Pancreas (tissue), 10 donors: ENCODE measurements at regions of chr1 and their contacts with region 1.

Region 1: DNA sequence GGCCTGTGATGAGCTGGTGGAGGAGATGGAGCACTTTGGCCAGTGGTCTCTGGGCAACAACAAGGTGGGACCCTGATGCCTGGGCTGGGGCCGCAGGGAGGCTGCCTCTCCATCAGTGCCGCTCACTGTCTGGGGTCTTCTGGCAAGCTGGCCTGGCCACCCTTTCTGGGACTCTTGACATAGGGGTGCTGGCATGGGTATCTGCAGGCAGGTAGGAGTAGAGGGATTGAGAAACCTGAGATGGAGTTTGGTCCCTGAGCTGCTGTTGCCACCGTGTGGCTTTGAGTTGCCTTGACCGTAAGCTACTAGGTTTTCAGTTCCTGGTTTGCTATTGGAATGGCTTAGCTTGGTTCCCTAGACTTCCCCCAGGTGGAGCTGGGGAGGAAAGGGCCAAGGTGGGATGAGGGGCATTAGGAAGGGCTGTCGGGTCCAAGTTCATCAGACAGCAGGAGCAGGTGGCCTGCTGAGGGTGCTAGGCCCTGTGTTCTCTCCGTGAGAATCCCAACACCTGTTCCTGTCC is 13.2 kb upstream of the MFN2 start:
- DNase-seq: peak in 4 of 6 donors; percentile 70 to 81 (median 76)
- ATAC-seq: peak; percentile 89 to 97 (median 94)
- H3K4me3 ChIP-seq: no peak overlapping the region
- H3K27ac ChIP-seq: peak overlapping the region in 1 of 4 donors; percentile 27
- H3K4me1 ChIP-seq: peaks cover 0 to 4% (median 0%) of the 10 kb centered on the region in 3 donors
- H3K27me3 ChIP-seq: no peaks in the 10 kb centered on the region
- CTCF ChIP-seq: peak; percentile 17 to 42 (median 33)

Region 2: GRCh38 chr1:11918779-11919519 is 48.1 kb before region 1 on chr1:
- intact Hi-C with region 1: loop called in 1 of 3 experiments (anchors 10 kb)
- DNase-seq: no peak
- ATAC-seq: peak in 3 of 4 donors; percentile 22 to 48 (median 45)
- H3K4me3 ChIP-seq: no peak overlapping the region
- H3K27ac ChIP-seq: no peak overlapping the region
- H3K4me1 ChIP-seq: peaks cover 0 to 3% (median 0%) of the 10 kb centered on the region in 3 donors
- H3K27me3 ChIP-seq: no peaks in the 10 kb centered on the region
- CTCF ChIP-seq: no peak

Region 3: GRCh38 chr1:12143631-12144155 is 176.6 kb after region 1 on chr1:
- intact Hi-C with region 1: no loop called
- DNase-seq: peak in 3 of 6 donors; percentile 15 to 72 (median 26)
- ATAC-seq: peak in 3 of 4 donors; percentile 65 to 81 (median 73)
- H3K4me3 ChIP-seq: no peak overlapping the region
- H3K27ac ChIP-seq: peak overlapping the region in 2 of 4 donors; percentile 44 to 52
- H3K4me1 ChIP-seq: no peaks in the 10 kb centered on the region
- H3K27me3 ChIP-seq: no peaks in the 10 kb centered on the region
- CTCF ChIP-seq: no peak